ENCODE measurements at regions of chr6 and their contacts with region 1.

Region 1: GRCh38 chr6:155349129-155349528 is 34.8 kb upstream of the TFB1M start:
- DNase-seq: no peak
- ATAC-seq: peak; percentile 47; the same call in 2 of the 3 replicates
- H3K4me3 ChIP-seq: no peak overlapping the region
- H3K27ac ChIP-seq: no peak overlapping the region
- H3K4me1 ChIP-seq: peaks cover 25% of the 10 kb centered on the region
- H3K27me3 ChIP-seq: no peaks in the 10 kb centered on the region
- CTCF ChIP-seq: no peak
- EP300 ChIP-seq: no peak
- POLR2A ChIP-seq: no peak
- RAD21 ChIP-seq: no peak

Region 2: GRCh38 chr6:155380666-155381332 is 31.7 kb after region 1 on chr6:
- CTCF ChIA-PET with region 1: no interaction called
- POLR2A ChIA-PET with region 1: no interaction called
- in situ Hi-C with region 1: loop called (anchors 5 kb)
- intact Hi-C with region 1: no loop called
- DNase-seq: peak; percentile 24
- ATAC-seq: peak; percentile 54; the same call in 2 of the 3 replicates
- H3K4me3 ChIP-seq: no peak overlapping the region
- H3K27ac ChIP-seq: no peak overlapping the region
- H3K4me1 ChIP-seq: peaks cover 12% of the 10 kb centered on the region
- H3K27me3 ChIP-seq: no peaks in the 10 kb centered on the region
- CTCF ChIP-seq: peak; percentile 47
- EP300 ChIP-seq: no peak
- POLR2A ChIP-seq: no peak
- RAD21 ChIP-seq: no peak

Measured in HepG2 (cell line).